ENCODE measurements at regions of chr4 and their contacts with region 1.

Region 1: GRCh38 chr4:177047070-177047850 is 254.5 kb upstream of the VEGFC start:
- DNase-seq: peak; percentile 34
- H3K4me3 Mint-ChIP-seq: no peak overlapping the region
- H3K27ac Mint-ChIP-seq: no peak overlapping the region
- H3K4me1 Mint-ChIP-seq: peaks cover 3% of the 10 kb centered on the region
- H3K27me3 Mint-ChIP-seq: peaks cover 7% of the 10 kb centered on the region

Region 2: GRCh38 chr4:176377780-176378179 is 669.5 kb before region 1 on chr4:
- intact Hi-C with region 1: loop called (anchors 1 kb)
- DNase-seq: no peak
- H3K4me3 Mint-ChIP-seq: no peak overlapping the region
- H3K27ac Mint-ChIP-seq: no peak overlapping the region
- H3K4me1 Mint-ChIP-seq: no peaks in the 10 kb centered on the region
- H3K27me3 Mint-ChIP-seq: peaks cover 6% of the 10 kb centered on the region

Region 3: DNA sequence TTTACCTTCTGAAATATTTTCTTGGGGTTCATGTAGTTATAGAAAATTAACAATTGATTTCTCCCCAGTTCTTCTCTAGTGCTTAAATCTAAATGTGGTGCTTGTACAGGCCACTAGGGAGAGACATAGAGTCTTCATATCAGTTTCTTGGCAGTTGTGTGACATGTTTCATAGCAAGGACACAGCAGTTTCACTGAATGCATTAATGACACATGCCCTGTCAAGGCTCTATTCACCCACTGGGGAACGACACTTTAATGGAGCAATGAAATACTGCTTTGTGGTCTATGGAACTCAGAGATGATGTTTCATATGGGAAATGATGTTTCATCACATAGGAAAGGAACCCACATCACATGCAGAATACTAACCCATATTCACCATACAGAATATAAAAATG is 257.3 kb before region 1 on chr4:
- intact Hi-C with region 1: loop called (anchors 1 kb)
- DNase-seq: no peak
- H3K4me3 Mint-ChIP-seq: no peak overlapping the region
- H3K27ac Mint-ChIP-seq: no peak overlapping the region
- H3K4me1 Mint-ChIP-seq: peaks cover 11% of the 10 kb centered on the region
- H3K27me3 Mint-ChIP-seq: peaks cover 42% of the 10 kb centered on the region

Region 4: GRCh38 chr4:176875446-176875930 is 171.8 kb before region 1 on chr4:
- intact Hi-C with region 1: no loop called
- DNase-seq: no peak
- H3K4me3 Mint-ChIP-seq: no peak overlapping the region
- H3K27ac Mint-ChIP-seq: no peak overlapping the region
- H3K4me1 Mint-ChIP-seq: no peaks in the 10 kb centered on the region
- H3K27me3 Mint-ChIP-seq: no peaks in the 10 kb centered on the region

Region 5: GRCh38 chr4:177204126-177204525 is 156.9 kb after region 1 on chr4:
- intact Hi-C with region 1: no loop called
- DNase-seq: no peak
- H3K4me3 Mint-ChIP-seq: no peak overlapping the region
- H3K27ac Mint-ChIP-seq: no peak overlapping the region
- H3K4me1 Mint-ChIP-seq: peaks cover 3% of the 10 kb centered on the region
- H3K27me3 Mint-ChIP-seq: no peaks in the 10 kb centered on the region

Measured in activated T-helper 2 cell treated with anti-CD3 and anti-CD28 coated beads, Interferon-gamma antibody, Interleukin-2, Interleukin-4, amounts not matched to agents 10 μg/mL and 5 μg/mL and 100 μg/mL, durations not matched to agents 14 hours and 24 hours and 36 hours (primary cell).